Mammary epithelial cell (primary cell): ENCODE measurements at regions of chr9 and their contacts with region 1.

Region 1: DNA sequence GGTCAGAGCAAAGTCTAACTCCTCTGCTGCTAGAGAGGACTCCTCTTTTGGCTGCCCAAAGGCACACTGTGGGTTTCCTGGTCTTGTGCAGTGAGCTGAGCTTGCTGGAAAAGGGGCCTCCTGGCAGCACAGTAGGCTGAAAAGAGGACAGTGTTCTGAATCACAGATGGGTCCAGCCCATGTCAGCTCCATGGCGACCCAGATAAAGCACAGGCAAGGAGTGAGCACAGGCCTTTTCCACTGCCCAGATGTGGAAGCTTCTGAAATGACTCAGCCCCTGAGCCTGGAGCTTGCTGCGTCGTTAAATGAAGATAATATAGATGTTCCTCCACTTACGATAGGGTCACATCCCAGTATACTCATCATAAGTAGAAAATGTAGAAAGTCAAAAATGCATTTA is 8.1 kb downstream of the CCDC180 start:
- DNase-seq: no peak
- H3K4me3 ChIP-seq: no peak overlapping the region
- H3K27ac ChIP-seq: no peak overlapping the region
- H3K4me1 ChIP-seq: no peaks in the 10 kb centered on the region
- H3K27me3 ChIP-seq: no peaks in the 10 kb centered on the region
- CTCF ChIP-seq: no peak

Region 2: GRCh38 chr9:96418074-96418809 is 897.3 kb before region 1 on chr9 and contains the start of gene ZNF367:
- CTCF ChIA-PET with region 1: no interaction called
- dilution Hi-C with region 1: no loop called
- in situ Hi-C with region 1: no loop called
- intact Hi-C with region 1: no loop called
- DNase-seq: peak; percentile 99
- H3K4me3 ChIP-seq: peak within 1 kb of the TSS; percentile 62 to 95 (median 83)
- H3K27ac ChIP-seq: peak within 1 kb of the TSS; percentile 90
- H3K4me1 ChIP-seq: peaks cover 18% of the 10 kb centered on the region
- H3K27me3 ChIP-seq: no peaks in the 10 kb centered on the region
- CTCF ChIP-seq: no peak
- total RNA-seq, gene ZNF367: 1.5 to 7.9 TPM

Region 3: GRCh38 chr9:97293207-97293721 is 22.3 kb before region 1 on chr9:
- CTCF ChIA-PET with region 1: no interaction called
- dilution Hi-C with region 1: no loop called
- in situ Hi-C with region 1: no loop called
- intact Hi-C with region 1: no loop called
- DNase-seq: no peak
- H3K4me3 ChIP-seq: no peak overlapping the region
- H3K27ac ChIP-seq: no peak overlapping the region
- H3K4me1 ChIP-seq: no peaks in the 10 kb centered on the region
- H3K27me3 ChIP-seq: no peaks in the 10 kb centered on the region
- CTCF ChIP-seq: no peak

Region 4: DNA sequence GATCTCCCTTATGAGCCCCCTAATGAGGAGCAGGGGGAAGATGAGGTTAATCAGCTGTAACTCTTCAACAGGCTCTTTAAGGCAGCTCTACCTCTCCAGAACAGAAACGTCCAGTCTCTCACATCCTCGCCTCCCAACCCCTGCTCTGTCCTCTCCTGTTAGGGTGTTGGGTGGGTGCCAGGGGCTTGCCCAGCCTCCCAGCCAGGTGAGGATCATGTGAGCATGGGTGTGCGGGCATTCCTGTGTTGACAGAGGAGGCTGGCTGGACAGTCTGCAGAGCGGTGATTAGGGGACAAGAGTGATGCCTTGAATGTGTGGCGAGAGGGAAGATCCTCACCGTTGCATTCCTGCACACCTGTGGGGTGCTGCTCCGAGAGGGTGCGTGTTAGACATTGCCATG is 43.6 kb after region 1 on chr9:
- CTCF ChIA-PET with region 1: no interaction called
- dilution Hi-C with region 1: loop called (anchors 5 kb)
- in situ Hi-C with region 1: no loop called
- intact Hi-C with region 1: no loop called
- DNase-seq: no peak
- H3K4me3 ChIP-seq: no peak overlapping the region
- H3K27ac ChIP-seq: no peak overlapping the region
- H3K4me1 ChIP-seq: no peaks in the 10 kb centered on the region
- H3K27me3 ChIP-seq: no peaks in the 10 kb centered on the region
- CTCF ChIP-seq: no peak